K562 (cell line): ENCODE measurements at regions of chr16 and their contacts with region 1.

Region 1: GRCh38 chr16:46947900-46948547 is 25.4 kb downstream of the DNAJA2 start:
- DNase-seq: peak; percentile 45 to 64 (median 50)
- ATAC-seq: peak; percentile 86
- H3K4me3 ChIP-seq: no peak overlapping the region
- H3K27ac ChIP-seq: no peak overlapping the region
- H3K4me1 ChIP-seq: peaks cover 3% of the 10 kb centered on the region in 2 experiments; a peak in 3 of 5 replicates
- H3K27me3 ChIP-seq: no peaks in the 10 kb centered on the region; a peak in 1 of 5 replicates
- CTCF ChIP-seq: peak; percentile 64 to 85 (median 66)
- EP300 ChIP-seq: no peak
- POLR2A ChIP-seq: no peak
- RAD21 ChIP-seq: peak; percentile 79 to 89

Region 2: DNA sequence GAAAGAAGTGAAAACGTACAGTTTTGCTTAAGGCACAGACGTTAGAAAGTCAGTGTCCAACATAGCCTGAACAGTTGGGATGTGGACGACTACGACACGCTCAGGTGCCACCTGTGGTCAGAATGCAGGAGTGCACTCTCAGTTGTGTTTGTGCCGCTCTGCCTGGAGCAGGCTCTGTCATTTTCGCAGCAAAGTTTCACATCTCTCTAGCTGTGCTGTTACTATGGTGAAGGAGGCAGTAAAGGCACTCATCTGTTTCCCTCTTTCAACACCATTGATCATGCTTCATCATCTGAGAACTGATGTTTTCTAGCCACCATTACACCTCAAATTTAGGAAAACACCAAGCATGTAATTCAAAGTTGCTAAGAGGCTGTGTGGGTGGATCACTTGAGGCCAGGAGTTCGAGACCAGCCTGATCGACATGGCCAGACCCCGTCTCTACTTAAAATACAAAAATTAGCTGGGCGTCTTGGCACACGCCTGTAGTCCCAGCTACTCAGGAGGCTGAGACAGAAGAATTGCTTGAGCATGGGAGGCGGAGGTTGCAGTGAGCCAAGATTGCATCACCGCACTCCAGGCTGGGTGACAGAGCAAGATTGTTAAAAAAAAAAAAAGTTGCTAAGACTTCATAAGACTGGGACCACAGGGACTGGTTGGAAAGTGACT is 70.3 kb after region 1 on chr16:
- CTCF ChIA-PET with region 1: interaction called, 13 read pairs
- POLR2A ChIA-PET with region 1: no interaction called
- in situ Hi-C with region 1: loop called (anchors 5 kb)
- intact Hi-C with region 1: loop called (anchors 1 kb)
- DNase-seq: peak; percentile 58 to 65 (median 60)
- ATAC-seq: peak; percentile 99
- H3K4me3 ChIP-seq: no peak overlapping the region
- H3K27ac ChIP-seq: no peak overlapping the region
- H3K4me1 ChIP-seq: peaks cover 0 to 6% of the 10 kb centered on the region in 2 experiments; a peak in 1 of 5 replicates
- H3K27me3 ChIP-seq: peaks cover 28 to 42% of the 10 kb centered on the region in 2 experiments
- CTCF ChIP-seq: peak; percentile 68 to 76 (median 72)
- EP300 ChIP-seq: no peak
- POLR2A ChIP-seq: no peak
- RAD21 ChIP-seq: peak; percentile 35 to 61; a peak in 3 of 4 replicates

Region 3: GRCh38 chr16:47023945-47024344 is 75.9 kb after region 1 on chr16:
- CTCF ChIA-PET with region 1: no interaction called
- POLR2A ChIA-PET with region 1: interaction called, 3 read pairs
- in situ Hi-C with region 1: loop called (anchors 5 kb)
- intact Hi-C with region 1: no loop called
- DNase-seq: no peak
- ATAC-seq: no peak
- H3K4me3 ChIP-seq: no peak overlapping the region
- H3K27ac ChIP-seq: no peak overlapping the region
- H3K4me1 ChIP-seq: no peaks in the 10 kb centered on the region
- H3K27me3 ChIP-seq: peaks cover 14 to 31% of the 10 kb centered on the region in 2 experiments
- CTCF ChIP-seq: no peak
- EP300 ChIP-seq: no peak
- POLR2A ChIP-seq: no peak
- RAD21 ChIP-seq: no peak

Region 4: DNA sequence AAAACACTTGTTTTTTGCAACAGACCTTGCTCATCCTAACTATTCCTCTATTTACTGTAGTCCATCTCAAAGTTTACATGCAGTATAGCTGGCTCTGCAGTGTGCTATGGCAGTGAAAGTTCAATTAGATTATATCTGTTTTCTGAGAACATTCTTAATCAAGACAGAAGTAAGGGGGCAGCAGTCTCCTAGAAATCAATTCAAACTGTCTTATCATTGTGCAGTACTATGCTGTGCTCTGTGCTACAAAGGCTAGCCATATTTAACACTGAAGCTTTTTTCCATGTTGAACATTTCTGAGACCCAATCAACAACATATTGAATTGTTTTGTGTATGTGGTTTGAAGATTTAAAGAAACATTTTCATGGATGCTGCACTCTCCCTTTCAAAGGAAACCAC is 184.3 kb after region 1 on chr16:
- CTCF ChIA-PET with region 1: no interaction called
- POLR2A ChIA-PET with region 1: no interaction called
- in situ Hi-C with region 1: no loop called
- intact Hi-C with region 1: no loop called
- DNase-seq: peak in 1 of 4 experiments; percentile 21
- ATAC-seq: peak; percentile 69
- H3K4me3 ChIP-seq: no peak overlapping the region
- H3K27ac ChIP-seq: no peak overlapping the region
- H3K4me1 ChIP-seq: peaks cover 0 to 6% of the 10 kb centered on the region in 2 experiments; a peak in 2 of 5 replicates
- H3K27me3 ChIP-seq: no peaks in the 10 kb centered on the region
- CTCF ChIP-seq: peak in 1 of 3 experiments; percentile 42; a peak in 2 of 6 replicates
- EP300 ChIP-seq: no peak
- POLR2A ChIP-seq: no peak
- RAD21 ChIP-seq: peak; percentile 21 to 58; a peak in 3 of 4 replicates

Region 5: DNA sequence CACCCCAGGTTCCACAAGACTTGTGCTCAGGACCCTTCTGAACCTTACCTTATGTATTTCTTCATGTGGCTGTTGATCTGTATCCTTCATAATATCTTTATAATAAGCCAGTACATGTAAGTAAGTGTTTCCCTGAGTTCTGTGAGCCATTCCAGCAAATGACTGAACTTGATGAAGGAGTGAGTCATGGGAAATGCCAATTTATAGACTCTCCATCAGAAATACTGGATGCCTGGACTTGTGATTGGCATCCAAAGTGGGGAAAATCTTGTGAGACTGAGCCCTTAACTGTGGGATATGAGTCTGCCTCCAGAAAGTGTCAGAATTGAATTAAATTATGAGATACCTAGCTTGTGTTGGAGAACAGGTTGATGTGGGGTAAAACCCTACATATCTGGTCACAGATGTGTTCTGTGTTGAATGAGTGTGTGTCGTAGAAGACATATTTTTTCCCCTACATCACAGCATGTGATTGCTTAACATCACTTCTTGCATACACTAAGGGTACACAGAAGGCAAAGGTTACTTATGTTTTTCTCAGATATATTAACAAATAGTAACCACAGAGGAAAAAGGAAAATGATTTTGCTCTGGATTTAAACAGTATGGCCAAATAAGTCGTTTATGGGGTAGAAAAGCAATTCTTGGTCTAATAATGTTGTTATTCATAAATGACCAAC is 265.9 kb after region 1 on chr16:
- CTCF ChIA-PET with region 1: no interaction called
- POLR2A ChIA-PET with region 1: no interaction called
- in situ Hi-C with region 1: no loop called
- intact Hi-C with region 1: no loop called
- DNase-seq: no peak
- ATAC-seq: no peak
- H3K4me3 ChIP-seq: no peak overlapping the region
- H3K27ac ChIP-seq: no peak overlapping the region
- H3K4me1 ChIP-seq: no peaks in the 10 kb centered on the region
- H3K27me3 ChIP-seq: no peaks in the 10 kb centered on the region
- CTCF ChIP-seq: no peak
- EP300 ChIP-seq: no peak
- POLR2A ChIP-seq: no peak
- RAD21 ChIP-seq: no peak